Activated T-helper 1 cell treated with anti-CD3 and anti-CD28 coated beads, Interleukin-12 subunit alpha, Interleukin-12 subunit beta, Interleukin-2, Interleukin-4 antibody, amounts not matched to agents 30 ng/mL and 10 ng/mL and 1 ng/mL, durations not matched to agents 14 hours and 24 hours and 36 hours (primary cell): ENCODE measurements at regions of chr6 and their contacts with region 1.

Region 1: GRCh38 chr6:27753668-27754407 is 158.4 kb downstream of the OR2B2 start:
- DNase-seq: peak; percentile 65
- H3K4me3 Mint-ChIP-seq: peak overlapping the region; percentile 83
- H3K27ac Mint-ChIP-seq: peak overlapping the region; percentile 69
- H3K4me1 Mint-ChIP-seq: peaks cover 56% of the 10 kb centered on the region
- H3K27me3 Mint-ChIP-seq: peaks cover 2% of the 10 kb centered on the region

Region 2: GRCh38 chr6:26596579-26597388 is 1157.1 kb before region 1 on chr6 and contains the start of gene ABT1:
- intact Hi-C with region 1: loop called (anchors 5 kb)
- DNase-seq: peak; percentile 97
- H3K4me3 Mint-ChIP-seq: no peak within 1 kb of the TSS
- H3K27ac Mint-ChIP-seq: no peak within 1 kb of the TSS
- H3K4me1 Mint-ChIP-seq: peaks cover 39% of the 10 kb centered on the region
- H3K27me3 Mint-ChIP-seq: peaks cover 27% of the 10 kb centered on the region
- total RNA-seq, gene ABT1: 32.6 and 32.9 TPM in 2 replicates

Region 3: DNA sequence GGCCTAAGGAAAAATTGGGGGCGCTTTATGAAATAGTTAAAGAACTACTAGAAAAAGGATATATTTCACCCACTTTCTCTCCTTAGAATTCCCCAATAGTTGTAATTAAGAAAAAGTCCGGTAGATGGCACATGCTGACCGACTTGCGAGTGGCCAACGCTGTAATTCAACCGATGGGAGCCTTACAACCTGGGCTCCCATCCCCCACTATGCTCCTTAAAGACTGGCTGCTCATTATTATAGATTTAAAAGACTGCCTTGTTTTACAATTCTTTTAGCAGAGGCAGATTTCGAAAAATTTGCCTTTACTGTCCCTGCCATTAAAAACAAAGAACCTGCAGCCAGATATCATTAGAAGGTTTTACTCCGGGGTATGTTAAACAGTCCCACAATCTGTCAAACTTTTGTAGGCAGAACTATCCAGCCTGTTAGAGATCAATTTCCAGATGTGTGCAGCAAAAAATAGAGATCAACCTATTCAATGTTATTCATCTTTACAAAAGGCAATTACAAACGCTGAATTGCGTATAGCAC is 564.9 kb before region 1 on chr6:
- intact Hi-C with region 1: loop called (anchors 1 kb)
- DNase-seq: peak; percentile 25
- H3K4me3 Mint-ChIP-seq: peak overlapping the region; percentile 93
- H3K27ac Mint-ChIP-seq: no peak overlapping the region
- H3K4me1 Mint-ChIP-seq: peaks cover 15% of the 10 kb centered on the region
- H3K27me3 Mint-ChIP-seq: peaks cover 4% of the 10 kb centered on the region

Region 4: GRCh38 chr6:27503436-27504030 is 250.3 kb before region 1 on chr6:
- intact Hi-C with region 1: loop called (anchors 1 kb)
- DNase-seq: peak; percentile 60
- H3K4me3 Mint-ChIP-seq: peak overlapping the region; percentile 90
- H3K27ac Mint-ChIP-seq: peak overlapping the region; percentile 82
- H3K4me1 Mint-ChIP-seq: peaks cover 32% of the 10 kb centered on the region
- H3K27me3 Mint-ChIP-seq: peaks cover 42% of the 10 kb centered on the region

Region 5: GRCh38 chr6:27772261-27773001 is 18.6 kb after region 1 on chr6:
- intact Hi-C with region 1: loop called (anchors 1 kb)
- DNase-seq: peak; percentile 82
- H3K4me3 Mint-ChIP-seq: no peak overlapping the region
- H3K27ac Mint-ChIP-seq: peak overlapping the region; percentile 56
- H3K4me1 Mint-ChIP-seq: peaks cover 19% of the 10 kb centered on the region
- H3K27me3 Mint-ChIP-seq: peaks cover 22% of the 10 kb centered on the region

Region 6: GRCh38 chr6:27893059-27893835 is 139.4 kb after region 1 on chr6:
- intact Hi-C with region 1: loop called (anchors 1 kb)
- DNase-seq: peak; percentile 93
- H3K4me3 Mint-ChIP-seq: no peak overlapping the region
- H3K27ac Mint-ChIP-seq: no peak overlapping the region
- H3K4me1 Mint-ChIP-seq: peaks cover 61% of the 10 kb centered on the region
- H3K27me3 Mint-ChIP-seq: no peaks in the 10 kb centered on the region